Activated CD8-positive, alpha-beta memory T cell treated with anti-CD3 and anti-CD28 coated beads, Interleukin-2, amount 10 ng/mL, durations not matched to agents 7 days and 5 days (primary cell): ENCODE measurements at regions of chr1 and their contacts with region 1.

Region 1: GRCh38 chr1:78132174-78132947 is 86.6 kb downstream of the GIPC2 start:
- DNase-seq: no peak
- ATAC-seq: peak; percentile 51
- H3K4me3 Mint-ChIP-seq: no peak overlapping the region
- H3K27ac Mint-ChIP-seq: no peak overlapping the region
- H3K4me1 Mint-ChIP-seq: no peaks in the 10 kb centered on the region
- H3K27me3 Mint-ChIP-seq: peaks cover 6% of the 10 kb centered on the region

Region 2: GRCh38 chr1:77874804-77875445 is 257.4 kb before region 1 on chr1:
- CTCF ChIA-PET with region 1: no interaction called
- DNase-seq: no peak
- ATAC-seq: no peak
- H3K4me3 Mint-ChIP-seq: no peak overlapping the region
- H3K27ac Mint-ChIP-seq: no peak overlapping the region
- H3K4me1 Mint-ChIP-seq: no peaks in the 10 kb centered on the region
- H3K27me3 Mint-ChIP-seq: no peaks in the 10 kb centered on the region

Region 3: GRCh38 chr1:78114034-78114956 is 18.1 kb before region 1 on chr1:
- CTCF ChIA-PET with region 1: interaction called, 13 read pairs
- DNase-seq: peak; percentile 70
- ATAC-seq: peak; percentile 85
- H3K4me3 Mint-ChIP-seq: no peak overlapping the region
- H3K27ac Mint-ChIP-seq: no peak overlapping the region
- H3K4me1 Mint-ChIP-seq: peaks cover 6% of the 10 kb centered on the region
- H3K27me3 Mint-ChIP-seq: peaks cover 5% of the 10 kb centered on the region

Region 4: GRCh38 chr1:78145105-78145580 is 12.8 kb after region 1 on chr1:
- CTCF ChIA-PET with region 1: interaction called, 17 read pairs
- DNase-seq: peak; percentile 67
- ATAC-seq: peak; percentile 75
- H3K4me3 Mint-ChIP-seq: no peak overlapping the region
- H3K27ac Mint-ChIP-seq: no peak overlapping the region
- H3K4me1 Mint-ChIP-seq: peaks cover 24% of the 10 kb centered on the region
- H3K27me3 Mint-ChIP-seq: peaks cover 11% of the 10 kb centered on the region

Region 5: GRCh38 chr1:78303620-78304019 is 171.3 kb after region 1 on chr1:
- CTCF ChIA-PET with region 1: no interaction called
- DNase-seq: no peak
- ATAC-seq: no peak
- H3K4me3 Mint-ChIP-seq: no peak overlapping the region
- H3K27ac Mint-ChIP-seq: no peak overlapping the region
- H3K4me1 Mint-ChIP-seq: no peaks in the 10 kb centered on the region
- H3K27me3 Mint-ChIP-seq: no peaks in the 10 kb centered on the region

Region 6: DNA sequence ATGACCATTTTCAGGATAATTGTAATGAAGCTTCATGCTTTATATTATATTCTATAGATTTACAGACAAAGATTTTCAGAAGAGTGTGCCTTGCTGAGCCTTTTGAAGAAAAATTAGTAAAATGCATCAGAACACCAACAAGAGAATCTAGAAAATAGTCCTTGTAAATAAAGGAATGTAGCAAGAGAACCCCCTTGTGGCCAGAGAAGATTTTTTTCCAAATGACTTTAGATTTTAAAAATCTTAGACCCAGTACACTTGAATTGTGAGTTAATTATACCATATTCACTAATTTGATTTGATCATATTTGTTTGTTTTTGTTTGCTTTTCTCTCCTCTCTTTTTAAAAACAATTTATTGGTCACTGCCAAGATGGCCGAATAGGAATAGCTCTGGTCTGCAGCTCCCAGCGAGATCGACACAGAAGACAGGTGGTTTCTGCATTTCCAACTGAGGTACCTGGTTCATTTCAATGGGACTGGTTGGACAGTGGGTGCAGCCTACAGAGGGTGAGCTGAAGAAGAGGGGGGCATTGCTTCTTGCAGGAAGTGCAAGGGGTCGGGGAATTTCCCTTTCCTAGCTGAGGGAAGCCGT is 475.1 kb after region 1 on chr1:
- CTCF ChIA-PET with region 1: interaction called, 22 read pairs
- DNase-seq: no peak
- ATAC-seq: no peak
- H3K4me3 Mint-ChIP-seq: no peak overlapping the region
- H3K27ac Mint-ChIP-seq: no peak overlapping the region
- H3K4me1 Mint-ChIP-seq: no peaks in the 10 kb centered on the region
- H3K27me3 Mint-ChIP-seq: peaks cover 31% of the 10 kb centered on the region